CD8-positive, alpha-beta T cell (primary cell): ENCODE measurements at regions of chr11 and their contacts with region 1.

Region 1: GRCh38 chr11:63553741-63554151 is 9.4 kb downstream of the PLAAT2 start:
- DNase-seq: peak in 8 of 9 experiments; percentile 48 to 89 (median 76)
- ATAC-seq: peak; percentile 80
- H3K4me3 ChIP-seq: peak overlapping the region; percentile 15 to 17
- H3K4me3 Mint-ChIP-seq: peak overlapping the region; percentile 81
- H3K27ac ChIP-seq: peak overlapping the region; percentile 55 to 88
- H3K27ac Mint-ChIP-seq: peak overlapping the region; percentile 99
- H3K4me1 ChIP-seq: peaks cover 49% of the 10 kb centered on the region
- H3K4me1 Mint-ChIP-seq: peaks cover 74% of the 10 kb centered on the region
- H3K27me3 ChIP-seq: no peaks in the 10 kb centered on the region
- H3K27me3 Mint-ChIP-seq: no peaks in the 10 kb centered on the region
- CTCF ChIP-seq: no peak

Region 2: GRCh38 chr11:63459586-63459985 is 94.2 kb before region 1 on chr11:
- CTCF ChIA-PET with region 1: no interaction called
- POLR2A ChIA-PET with region 1: no interaction called
- intact Hi-C with region 1: no loop called
- DNase-seq: no peak
- ATAC-seq: no peak
- H3K4me3 ChIP-seq: no peak overlapping the region
- H3K4me3 Mint-ChIP-seq: no peak overlapping the region
- H3K27ac ChIP-seq: no peak overlapping the region
- H3K27ac Mint-ChIP-seq: no peak overlapping the region
- H3K4me1 ChIP-seq: no peaks in the 10 kb centered on the region
- H3K4me1 Mint-ChIP-seq: no peaks in the 10 kb centered on the region
- H3K27me3 ChIP-seq: no peaks in the 10 kb centered on the region
- H3K27me3 Mint-ChIP-seq: peaks cover 8% of the 10 kb centered on the region
- CTCF ChIP-seq: no peak

Region 3: GRCh38 chr11:63494975-63495374 is 58.8 kb before region 1 on chr11:
- CTCF ChIA-PET with region 1: no interaction called
- POLR2A ChIA-PET with region 1: no interaction called
- intact Hi-C with region 1: no loop called
- DNase-seq: no peak
- ATAC-seq: no peak
- H3K4me3 ChIP-seq: no peak overlapping the region
- H3K4me3 Mint-ChIP-seq: no peak overlapping the region
- H3K27ac ChIP-seq: no peak overlapping the region
- H3K27ac Mint-ChIP-seq: no peak overlapping the region
- H3K4me1 ChIP-seq: peaks cover 6% of the 10 kb centered on the region
- H3K4me1 Mint-ChIP-seq: peaks cover 16% of the 10 kb centered on the region
- H3K27me3 ChIP-seq: peaks cover 0 to 4% of the 10 kb centered on the region in 2 experiments
- H3K27me3 Mint-ChIP-seq: peaks cover 27% of the 10 kb centered on the region
- CTCF ChIP-seq: no peak

Region 4: GRCh38 chr11:63518548-63518947 is 35.2 kb before region 1 on chr11:
- CTCF ChIA-PET with region 1: no interaction called
- POLR2A ChIA-PET with region 1: no interaction called
- intact Hi-C with region 1: no loop called
- DNase-seq: peak in 2 of 9 experiments; percentile 24 to 56
- ATAC-seq: peak; percentile 77
- H3K4me3 ChIP-seq: no peak overlapping the region
- H3K4me3 Mint-ChIP-seq: no peak overlapping the region
- H3K27ac ChIP-seq: peak overlapping the region in 1 of 2 experiments; percentile 60
- H3K27ac Mint-ChIP-seq: peak overlapping the region; percentile 6
- H3K4me1 ChIP-seq: peaks cover 5% of the 10 kb centered on the region
- H3K4me1 Mint-ChIP-seq: peaks cover 16% of the 10 kb centered on the region
- H3K27me3 ChIP-seq: no peaks in the 10 kb centered on the region
- H3K27me3 Mint-ChIP-seq: no peaks in the 10 kb centered on the region
- CTCF ChIP-seq: no peak

Region 5: DNA sequence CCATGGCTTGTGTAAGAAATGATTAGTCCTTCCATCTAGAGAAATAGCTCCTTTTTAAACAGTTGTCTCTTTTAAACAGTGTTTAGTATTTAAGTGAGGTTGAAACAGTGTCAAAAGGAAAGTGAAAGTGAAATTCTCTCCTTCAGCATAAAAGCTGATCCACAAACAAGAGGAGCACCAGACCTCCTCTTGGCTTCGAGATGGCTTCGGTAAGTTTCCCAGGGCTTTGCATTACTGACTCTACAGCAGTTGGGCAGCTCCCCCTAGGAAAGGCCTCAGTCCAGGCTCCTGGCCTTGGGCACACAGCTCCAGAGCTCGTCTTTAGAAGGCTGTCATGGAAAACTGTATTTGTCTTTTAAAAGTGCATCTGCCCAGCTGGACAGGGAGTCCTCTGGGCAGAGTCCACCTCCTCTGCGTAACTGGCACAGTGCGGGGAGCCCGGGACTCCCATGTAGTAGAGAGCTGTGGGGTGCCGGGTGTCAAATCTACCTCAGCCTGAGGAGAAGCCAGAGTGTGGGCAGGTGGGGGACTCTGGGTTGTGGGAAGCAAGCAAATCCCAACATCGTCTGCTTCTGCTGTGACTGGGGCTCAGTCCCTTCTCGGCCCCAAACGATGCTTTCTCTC is 17.0 kb before region 1 on chr11 and contains the start of gene PLAAT4:
- CTCF ChIA-PET with region 1: interaction called, 15 read pairs
- POLR2A ChIA-PET with region 1: interaction called, 101 read pairs
- intact Hi-C with region 1: loop called (anchors 1 to 2 kb)
- DNase-seq: peak in 5 of 9 experiments; percentile 21 to 81 (median 65)
- ATAC-seq: peak; percentile 53
- H3K4me3 ChIP-seq: peak within 1 kb of the TSS; percentile 71 to 85
- H3K4me3 Mint-ChIP-seq: peak within 1 kb of the TSS; percentile 92
- H3K27ac ChIP-seq: peak within 1 kb of the TSS; percentile 83 to 84
- H3K27ac Mint-ChIP-seq: peak within 1 kb of the TSS; percentile 97
- H3K4me1 ChIP-seq: peaks cover 84% of the 10 kb centered on the region
- H3K4me1 Mint-ChIP-seq: peaks cover 85% of the 10 kb centered on the region
- H3K27me3 ChIP-seq: no peaks in the 10 kb centered on the region
- H3K27me3 Mint-ChIP-seq: no peaks in the 10 kb centered on the region
- CTCF ChIP-seq: no peak
- total RNA-seq, gene PLAAT4: 81.9 to 84.0 TPM

Region 6: GRCh38 chr11:63567044-63567840 is 13.5 kb after region 1 on chr11:
- CTCF ChIA-PET with region 1: interaction called, 12 read pairs
- POLR2A ChIA-PET with region 1: interaction called, 3 read pairs
- intact Hi-C with region 1: loop called (anchors 1 to 2 kb)
- DNase-seq: peak in 8 of 9 experiments; percentile 41 to 95 (median 62)
- ATAC-seq: peak; percentile 88
- H3K4me3 ChIP-seq: no peak overlapping the region
- H3K4me3 Mint-ChIP-seq: peak overlapping the region; percentile 13
- H3K27ac ChIP-seq: peak overlapping the region; percentile 50 to 90
- H3K27ac Mint-ChIP-seq: peak overlapping the region; percentile 90
- H3K4me1 ChIP-seq: peaks cover 33% of the 10 kb centered on the region
- H3K4me1 Mint-ChIP-seq: peaks cover 44% of the 10 kb centered on the region
- H3K27me3 ChIP-seq: no peaks in the 10 kb centered on the region
- H3K27me3 Mint-ChIP-seq: no peaks in the 10 kb centered on the region
- CTCF ChIP-seq: no peak

Region 7: GRCh38 chr11:63573881-63574855 is 20.4 kb after region 1 on chr11:
- CTCF ChIA-PET with region 1: interaction called, 6 read pairs
- POLR2A ChIA-PET with region 1: interaction called, 15 read pairs
- intact Hi-C with region 1: no loop called
- DNase-seq: peak in 8 of 9 experiments; percentile 21 to 84 (median 38)
- ATAC-seq: peak; percentile 71
- H3K4me3 ChIP-seq: peak overlapping the region; percentile 21 to 41
- H3K4me3 Mint-ChIP-seq: peak overlapping the region; percentile 87
- H3K27ac ChIP-seq: peak overlapping the region; percentile 2 to 50
- H3K27ac Mint-ChIP-seq: peak overlapping the region; percentile 90
- H3K4me1 ChIP-seq: peaks cover 14% of the 10 kb centered on the region
- H3K4me1 Mint-ChIP-seq: peaks cover 29% of the 10 kb centered on the region
- H3K27me3 ChIP-seq: no peaks in the 10 kb centered on the region
- H3K27me3 Mint-ChIP-seq: no peaks in the 10 kb centered on the region
- CTCF ChIP-seq: no peak

Region 8: DNA sequence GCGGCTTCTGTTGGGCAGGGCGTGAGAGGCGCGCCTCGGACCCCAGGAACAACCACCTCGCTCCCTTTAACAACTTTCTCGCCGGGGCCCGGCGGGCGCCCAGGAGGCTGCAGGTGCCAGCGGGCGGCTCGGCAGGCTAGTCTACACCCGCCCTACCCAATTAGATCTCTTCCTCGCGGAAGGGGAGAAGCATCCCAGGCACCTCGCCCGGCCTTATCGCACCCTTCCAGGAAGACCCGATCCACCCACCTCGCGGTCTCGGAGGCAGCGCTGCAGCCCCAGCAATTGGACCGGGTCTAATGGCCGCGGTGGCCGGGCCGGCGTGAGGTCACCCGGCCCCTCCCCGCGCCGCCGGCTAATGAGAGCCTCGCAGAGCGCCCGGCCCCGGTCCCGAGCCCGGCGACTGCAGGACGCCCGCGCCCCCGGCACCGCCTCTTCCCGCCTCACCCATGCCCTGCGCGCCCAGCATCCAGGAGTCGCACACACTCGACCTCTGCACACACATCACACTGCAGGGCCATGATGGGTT is 60.5 kb after region 1 on chr11 and contains the start of gene PLAAT3:
- CTCF ChIA-PET with region 1: no interaction called
- POLR2A ChIA-PET with region 1: interaction called, 5 read pairs
- intact Hi-C with region 1: loop called (anchors 2 to 5 kb)
- DNase-seq: peak in 8 of 9 experiments; percentile 14 to 64 (median 32)
- ATAC-seq: peak; percentile 64
- H3K4me3 ChIP-seq: peak within 1 kb of the TSS; percentile 87 to 93
- H3K4me3 Mint-ChIP-seq: peak within 1 kb of the TSS; percentile 88
- H3K27ac ChIP-seq: peak within 1 kb of the TSS; percentile 61 to 66
- H3K27ac Mint-ChIP-seq: peak within 1 kb of the TSS; percentile 82
- H3K4me1 ChIP-seq: no peaks in the 10 kb centered on the region
- H3K4me1 Mint-ChIP-seq: peaks cover 21% of the 10 kb centered on the region
- H3K27me3 ChIP-seq: no peaks in the 10 kb centered on the region
- H3K27me3 Mint-ChIP-seq: no peaks in the 10 kb centered on the region
- CTCF ChIP-seq: no peak
- total RNA-seq, gene PLAAT3: 5.0 to 5.9 TPM

Region 9: DNA sequence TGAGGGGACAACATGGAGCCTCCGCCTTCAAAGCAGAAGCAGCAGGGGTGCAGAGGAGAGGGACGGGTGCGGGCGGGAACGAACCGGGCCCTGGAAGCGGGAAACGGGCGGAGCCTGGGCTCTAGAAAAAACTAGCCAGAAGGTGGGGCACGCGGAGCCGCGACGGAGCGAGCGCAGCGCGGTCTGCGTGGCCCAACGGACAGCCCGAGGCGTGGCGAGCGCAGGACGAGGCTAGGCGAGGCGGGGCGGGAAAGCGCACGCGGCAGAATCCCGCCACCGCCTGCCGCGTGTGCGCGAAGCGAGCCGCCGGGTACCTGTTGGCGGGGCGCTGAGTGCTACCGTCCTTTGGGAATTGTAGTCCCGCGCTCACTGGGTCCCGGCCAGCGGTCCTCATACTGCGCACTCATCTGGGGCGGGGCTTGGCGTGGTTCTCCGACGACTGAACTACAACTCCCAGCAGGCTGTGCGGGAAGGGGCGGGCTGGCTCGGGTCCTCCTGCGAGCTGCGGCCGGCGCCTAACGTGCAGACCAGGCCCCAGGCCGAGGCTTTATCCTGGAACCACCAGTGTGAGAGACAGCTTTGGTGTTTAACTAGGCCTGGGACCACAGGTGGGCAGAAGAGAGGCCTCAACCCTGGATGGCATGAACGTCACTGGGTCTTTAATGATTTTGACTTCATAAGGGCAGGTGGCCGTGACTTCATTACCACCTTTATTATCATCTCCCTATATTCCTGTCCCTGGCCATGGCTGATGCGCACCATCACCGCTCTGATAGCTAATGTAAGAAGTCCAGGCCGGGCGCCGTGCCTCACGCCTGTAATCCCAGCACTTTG is 117.8 kb after region 1 on chr11 and contains the start of gene ATL3:
- CTCF ChIA-PET with region 1: no interaction called
- POLR2A ChIA-PET with region 1: no interaction called
- intact Hi-C with region 1: loop called in 1 of 2 experiments (anchors 5 kb)
- DNase-seq: peak; percentile 87 to 98 (median 96)
- ATAC-seq: peak; percentile 95
- H3K4me3 ChIP-seq: peak within 1 kb of the TSS; percentile 79 to 91
- H3K4me3 Mint-ChIP-seq: peak within 1 kb of the TSS; percentile 86
- H3K27ac ChIP-seq: peak within 1 kb of the TSS; percentile 65 to 74
- H3K27ac Mint-ChIP-seq: peak within 1 kb of the TSS; percentile 87
- H3K4me1 ChIP-seq: peaks cover 19% of the 10 kb centered on the region
- H3K4me1 Mint-ChIP-seq: peaks cover 29% of the 10 kb centered on the region
- H3K27me3 ChIP-seq: no peaks in the 10 kb centered on the region
- H3K27me3 Mint-ChIP-seq: no peaks in the 10 kb centered on the region
- CTCF ChIP-seq: no peak
- total RNA-seq, gene ATL3: 11.6 to 11.8 TPM

Region 10: DNA sequence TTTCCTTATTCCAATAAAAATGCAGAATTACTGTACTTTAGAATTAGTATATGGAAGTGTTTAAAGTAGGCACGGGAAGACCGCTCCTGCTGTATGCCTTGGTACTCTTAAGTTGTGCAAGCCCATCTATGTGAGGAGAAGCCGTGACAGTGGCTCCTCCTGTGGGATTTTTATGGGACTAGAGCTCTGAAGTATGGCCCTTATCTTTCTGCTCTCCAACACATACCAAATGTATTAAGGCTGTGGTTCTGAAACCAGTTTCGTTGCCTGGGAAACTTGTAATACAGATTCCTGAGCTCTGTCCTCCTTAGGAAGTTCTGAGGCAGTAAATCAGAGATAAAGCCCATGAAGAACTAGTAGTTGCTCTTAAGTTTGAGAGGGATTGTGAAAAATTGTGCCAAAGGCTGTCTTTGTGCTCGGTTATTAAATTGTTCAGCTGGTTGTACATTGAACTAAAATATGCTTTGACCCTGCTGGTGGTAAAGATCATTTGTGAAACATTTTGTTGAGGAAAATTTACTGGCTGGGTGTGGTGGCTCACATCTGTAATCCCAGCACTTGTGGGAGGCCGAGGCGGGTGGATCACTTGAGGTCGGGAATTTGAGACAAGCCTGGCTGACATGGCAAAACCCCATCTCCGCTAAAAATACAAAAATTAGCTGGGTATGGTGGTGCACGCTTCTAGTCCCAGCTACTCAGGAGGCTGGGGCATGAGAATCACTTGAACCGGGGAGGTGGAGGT is 156.9 kb after region 1 on chr11:
- CTCF ChIA-PET with region 1: no interaction called
- POLR2A ChIA-PET with region 1: no interaction called
- intact Hi-C with region 1: no loop called
- DNase-seq: no peak
- ATAC-seq: no peak
- H3K4me3 ChIP-seq: no peak overlapping the region
- H3K4me3 Mint-ChIP-seq: no peak overlapping the region
- H3K27ac ChIP-seq: no peak overlapping the region
- H3K27ac Mint-ChIP-seq: no peak overlapping the region
- H3K4me1 ChIP-seq: no peaks in the 10 kb centered on the region
- H3K4me1 Mint-ChIP-seq: no peaks in the 10 kb centered on the region
- H3K27me3 ChIP-seq: no peaks in the 10 kb centered on the region
- H3K27me3 Mint-ChIP-seq: no peaks in the 10 kb centered on the region
- CTCF ChIP-seq: no peak